Cardiac septum (tissue), 1 donor: ENCODE measurements at regions of chr9 and their contacts with region 1.

Region 1: GRCh38 chr9:38017149-38017884 is 51.7 kb downstream of the SHB start:
- DNase-seq: peak; percentile 90

Region 2: DNA sequence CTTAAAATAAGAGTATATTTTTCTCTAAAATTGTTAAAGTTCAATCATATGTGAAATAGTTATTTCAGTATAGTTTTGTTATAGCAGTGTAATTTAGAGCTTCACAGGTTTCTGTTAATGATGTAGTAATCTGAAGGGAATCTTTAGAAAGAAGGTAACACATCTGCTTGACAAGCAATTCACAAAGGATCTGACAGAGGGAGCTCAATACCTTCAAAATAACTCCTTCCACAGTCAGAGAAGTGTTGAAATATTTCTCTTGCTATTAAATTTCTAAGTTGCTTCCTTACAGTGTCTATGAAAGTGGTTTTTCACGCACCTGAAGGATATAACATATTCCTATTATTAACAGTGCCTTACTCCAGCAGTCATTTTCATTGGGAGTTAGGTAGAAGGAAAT is 158.3 kb before region 1 on chr9:
- intact Hi-C with region 1: no loop called
- DNase-seq: no peak

Region 3: DNA sequence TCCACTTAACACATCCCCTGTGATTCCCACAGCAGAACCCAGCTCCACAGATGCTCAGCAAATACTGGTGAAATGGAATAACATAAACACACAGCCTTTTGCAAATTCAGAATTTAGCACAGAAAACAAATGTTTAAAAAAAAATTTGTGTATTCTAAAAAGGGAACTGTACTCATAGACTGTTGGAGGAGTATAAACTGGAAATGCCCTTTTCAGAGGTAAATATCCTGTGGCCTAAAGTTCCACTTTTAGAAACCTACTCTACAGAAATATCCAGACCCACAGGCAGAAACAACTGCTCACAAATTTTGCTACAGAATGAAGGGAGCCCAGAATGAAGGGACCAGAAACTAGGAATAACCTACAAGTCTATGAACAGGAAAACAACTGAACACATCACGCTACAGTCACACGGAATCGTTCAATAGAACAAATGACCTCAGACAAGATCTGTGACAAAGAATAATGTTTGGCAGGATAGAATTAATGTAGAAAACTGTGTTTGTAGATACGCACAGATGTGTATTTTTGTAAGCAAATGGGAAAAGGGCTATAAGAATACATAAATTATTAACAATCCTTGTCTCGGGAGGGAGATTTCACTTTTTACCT is 26.8 kb before region 1 on chr9:
- intact Hi-C with region 1: loop called (anchors 2 kb)
- DNase-seq: no peak

Region 4: GRCh38 chr9:38141746-38142591 is 124.7 kb after region 1 on chr9:
- intact Hi-C with region 1: no loop called
- DNase-seq: no peak